ENCODE measurements at regions of chr18 and their contacts with region 1.

Region 1: DNA sequence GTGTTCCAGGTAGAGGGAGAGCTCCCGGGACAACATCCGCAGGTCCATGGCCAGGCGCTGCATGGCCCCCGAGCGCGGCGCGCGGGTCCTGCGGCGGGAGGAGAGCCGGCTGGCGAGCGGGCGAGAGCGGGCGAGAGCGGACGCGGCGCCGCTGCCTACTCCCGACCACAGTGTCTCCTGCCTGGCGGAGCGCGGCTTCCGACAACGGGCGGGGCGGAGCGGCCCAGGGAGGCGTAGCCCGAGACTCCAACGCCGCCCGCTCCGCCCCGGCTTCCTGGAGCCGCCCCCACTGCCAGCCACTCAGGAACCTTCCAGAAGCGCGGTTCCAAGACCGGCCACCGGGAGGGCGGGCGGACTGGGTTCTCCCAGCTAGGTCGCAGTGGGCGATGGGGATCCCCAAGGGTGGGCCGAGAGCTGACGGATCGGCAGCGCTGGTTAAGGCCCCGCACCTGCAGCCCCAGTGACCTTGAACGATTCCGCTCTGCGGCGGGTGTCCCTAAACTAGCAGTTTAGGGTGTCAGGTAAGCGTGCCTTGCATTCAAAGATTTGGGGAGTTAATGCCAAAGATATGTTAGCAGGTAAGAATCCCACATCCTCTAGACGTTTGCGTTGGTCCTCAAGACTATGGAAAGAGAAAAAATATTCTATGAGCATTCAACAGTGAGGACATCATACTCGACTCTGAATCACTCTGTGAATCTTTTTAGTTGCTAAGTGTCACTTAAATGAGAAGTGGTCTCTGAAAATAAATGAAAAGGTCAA is at the start of gene ABHD3:
- DNase-seq: peak; percentile 96
- H3K4me3 ChIP-seq: peak within 1 kb of the TSS; percentile 92
- H3K27ac ChIP-seq: peak within 1 kb of the TSS; percentile 95
- H3K4me1 ChIP-seq: peaks cover 44% of the 10 kb centered on the region
- CTCF ChIP-seq: peak; percentile 11; the same call in 1 of the 2 replicates
- total RNA-seq, gene ABHD3: 126 and 154 TPM in 2 replicates

Region 2: DNA sequence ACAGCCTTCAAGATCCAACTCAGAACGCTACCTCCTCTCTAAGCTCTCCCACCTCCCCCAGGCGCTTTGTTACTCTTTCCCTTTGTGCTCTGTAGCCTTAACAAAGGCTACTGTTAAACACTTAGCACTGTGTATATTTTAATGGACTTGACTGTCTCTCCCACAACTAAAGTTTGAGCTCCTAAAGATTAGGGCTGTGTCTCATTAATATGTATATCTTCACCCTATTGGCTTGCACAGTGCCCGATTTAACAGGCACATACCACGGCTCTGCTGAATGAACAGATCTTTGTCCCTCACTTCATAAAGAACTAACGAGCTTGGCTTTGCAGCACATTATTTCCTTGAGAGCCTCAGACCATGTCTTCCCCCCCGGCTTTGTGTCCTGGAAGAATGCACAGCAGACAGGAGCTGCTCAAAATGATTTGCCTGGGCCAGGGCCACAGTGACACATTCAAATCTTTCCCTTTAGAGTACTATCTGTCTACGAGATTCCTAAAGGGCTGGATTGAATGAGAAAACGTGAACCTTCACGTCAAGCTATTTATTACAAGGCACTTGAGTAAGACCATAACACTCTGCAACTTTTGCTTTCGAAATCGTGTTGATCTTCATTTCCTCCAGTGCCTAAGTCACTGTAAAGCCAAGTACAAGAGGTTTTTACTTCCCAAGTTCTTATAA is 22.3 kb before region 1 on chr18:
- CTCF ChIA-PET with region 1: interaction called, 11 read pairs
- POLR2A ChIA-PET with region 1: interaction called, 9 read pairs
- intact Hi-C with region 1: loop called (anchors 2 kb)
- DNase-seq: peak; percentile 40
- H3K4me3 ChIP-seq: peak overlapping the region; percentile 25
- H3K27ac ChIP-seq: peak overlapping the region; percentile 21
- H3K4me1 ChIP-seq: peaks cover 49% of the 10 kb centered on the region
- CTCF ChIP-seq: no peak